ENCODE measurements at regions of chr22 and their contacts with region 1.

Region 1: DNA sequence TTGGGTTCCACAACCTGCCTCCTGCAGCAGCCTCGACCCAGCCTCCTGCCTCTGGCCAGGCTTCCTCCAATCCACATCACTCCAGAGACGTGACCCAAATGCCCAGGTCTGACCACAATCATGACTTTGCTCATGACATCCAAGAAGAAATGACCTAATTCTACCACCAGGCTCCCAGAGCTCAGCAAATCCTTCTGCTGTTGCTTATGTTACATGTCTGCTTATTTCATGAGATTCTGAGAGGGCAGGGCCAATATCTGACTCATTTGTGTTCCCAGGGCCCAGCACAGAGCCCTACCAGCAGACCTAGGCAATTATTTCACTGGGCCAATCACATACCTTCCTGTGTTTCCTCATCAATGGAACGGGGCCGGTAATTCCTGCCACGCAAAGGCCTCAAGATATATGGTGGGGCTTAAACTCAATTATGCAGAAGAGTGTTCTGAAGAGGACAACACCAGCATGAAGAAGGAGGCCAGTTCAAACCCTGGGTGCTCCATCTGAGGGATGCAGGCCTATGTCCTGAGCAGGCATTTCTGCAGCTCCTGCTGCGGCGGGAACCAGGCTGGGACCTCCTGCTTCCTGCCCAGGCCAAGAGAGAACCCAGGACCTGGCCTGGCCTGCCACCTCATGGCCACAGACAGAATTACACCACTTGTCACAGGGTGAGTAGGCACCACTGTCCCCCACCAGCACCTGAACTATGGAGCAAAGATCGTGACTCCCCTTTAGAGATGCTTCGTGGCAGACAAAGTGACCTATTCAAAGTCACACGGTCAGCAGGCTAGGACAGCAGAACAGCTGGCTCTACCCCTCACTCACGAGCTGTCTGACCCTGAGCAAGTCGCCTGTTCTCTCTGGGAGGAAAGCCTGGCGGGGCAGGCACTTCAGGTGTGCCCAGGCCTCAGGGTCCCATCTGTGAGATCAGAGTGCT is 5.9 kb downstream of the CENPM start:
- DNase-seq: peak; percentile 85
- ATAC-seq: peak; percentile 55
- H3K4me3 Mint-ChIP-seq: peak overlapping the region; percentile 92
- H3K27ac Mint-ChIP-seq: peak overlapping the region; percentile 100
- H3K4me1 Mint-ChIP-seq: peaks cover 61% of the 10 kb centered on the region
- H3K27me3 Mint-ChIP-seq: no peaks in the 10 kb centered on the region
- CTCF ChIP-seq: no peak

Region 2: DNA sequence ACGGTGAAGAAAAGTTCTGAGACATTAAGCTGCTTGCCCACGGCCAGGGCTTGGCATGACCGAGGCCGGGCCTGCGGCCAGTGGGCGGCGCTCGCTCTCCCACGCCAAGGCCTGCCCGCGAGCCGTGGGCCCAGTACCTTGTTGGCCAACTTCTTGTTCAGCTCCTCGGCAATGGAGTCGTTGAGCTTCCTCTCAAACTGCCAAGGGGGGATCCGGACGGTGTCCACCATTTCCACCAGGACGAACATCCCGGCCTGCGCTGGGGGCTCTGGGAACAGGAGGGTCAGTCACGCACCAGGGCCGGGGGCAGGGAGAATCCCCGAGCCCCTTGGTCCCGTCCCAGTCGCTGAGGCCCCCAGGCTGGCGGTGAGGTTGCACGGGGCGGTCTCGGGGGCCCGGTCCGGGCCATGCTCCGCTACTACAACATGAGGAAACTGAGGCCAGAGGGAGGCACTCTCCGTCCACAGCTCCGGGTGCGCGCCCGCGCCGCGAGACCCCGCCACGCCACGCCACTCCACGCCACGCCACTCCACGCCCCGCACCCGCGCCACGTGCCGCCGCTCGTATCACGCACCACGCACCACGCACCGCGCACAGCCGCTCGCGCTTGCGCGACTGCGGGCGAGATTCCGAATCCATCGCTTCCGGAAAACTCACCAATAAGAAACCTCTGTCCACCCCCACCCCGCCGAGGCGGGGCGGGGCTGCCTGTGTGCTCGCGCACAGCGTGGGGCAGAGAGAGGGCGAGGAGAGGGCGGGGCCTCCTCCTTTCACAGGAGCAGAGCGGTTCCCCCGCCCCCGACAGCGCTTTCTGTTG is 397.0 kb before region 1 on chr22 and contains the start of gene POLR3H:
- CTCF ChIA-PET with region 1: no interaction called
- POLR2A ChIA-PET with region 1: no interaction called
- intact Hi-C with region 1: loop called (anchors 5 kb)
- DNase-seq: peak; percentile 93
- ATAC-seq: peak; percentile 99
- H3K4me3 Mint-ChIP-seq: peak within 1 kb of the TSS; percentile 96
- H3K27ac Mint-ChIP-seq: peak within 1 kb of the TSS; percentile 86
- H3K4me1 Mint-ChIP-seq: peaks cover 43% of the 10 kb centered on the region
- H3K27me3 Mint-ChIP-seq: no peaks in the 10 kb centered on the region
- CTCF ChIP-seq: no peak
- total RNA-seq, gene POLR3H: 39.0 and 43.9 TPM in 2 replicates

Region 3: GRCh38 chr22:41697126-41697775 is 243.8 kb before region 1 on chr22:
- CTCF ChIA-PET with region 1: interaction called, 81 read pairs
- POLR2A ChIA-PET with region 1: interaction called, 34 read pairs
- intact Hi-C with region 1: no loop called
- DNase-seq: peak; percentile 91
- ATAC-seq: peak; percentile 83
- H3K4me3 Mint-ChIP-seq: peak overlapping the region; percentile 63
- H3K27ac Mint-ChIP-seq: peak overlapping the region; percentile 72
- H3K4me1 Mint-ChIP-seq: peaks cover 12% of the 10 kb centered on the region
- H3K27me3 Mint-ChIP-seq: no peaks in the 10 kb centered on the region
- CTCF ChIP-seq: peak; percentile 51

Region 4: DNA sequence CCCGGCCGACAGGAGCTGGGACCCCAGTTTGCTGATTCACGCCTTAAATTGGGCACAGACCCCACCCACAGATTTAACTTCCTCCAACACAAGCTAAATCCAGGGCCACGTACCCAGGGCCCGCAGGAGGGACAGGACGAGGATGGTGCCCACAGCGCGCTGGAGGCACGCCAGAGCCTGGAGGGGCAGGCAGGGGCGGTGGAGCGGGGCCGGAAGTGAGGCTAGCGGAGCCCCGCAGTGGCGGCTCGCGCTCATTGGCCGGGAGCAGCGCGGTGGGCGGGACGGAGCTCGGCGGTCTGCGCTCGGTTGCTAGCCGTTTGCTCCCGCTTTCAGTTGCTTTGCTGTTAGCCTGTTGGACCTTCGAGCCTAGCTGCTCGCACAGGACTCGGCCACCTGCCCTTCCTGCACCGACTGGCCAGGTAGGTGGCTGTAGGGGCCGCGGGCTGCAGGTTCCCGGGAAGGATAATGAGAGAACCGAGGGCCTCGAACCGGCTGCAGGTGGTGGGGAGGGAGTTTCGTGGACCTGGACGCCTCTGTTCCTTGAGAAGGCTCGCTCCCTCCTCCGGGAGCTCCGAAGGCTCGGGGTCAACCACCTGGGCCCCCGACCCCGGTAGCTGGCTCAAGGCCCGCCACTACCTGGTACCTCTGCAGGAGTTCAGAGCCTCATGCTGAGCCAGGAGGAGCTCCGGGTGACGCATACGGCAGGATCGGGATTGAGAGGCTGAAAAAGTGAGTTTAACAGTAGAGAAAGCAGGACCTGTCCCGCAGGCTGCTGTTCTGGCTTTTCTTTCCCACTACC is 140.6 kb before region 1 on chr22 and contains the start of gene CCDC134:
- CTCF ChIA-PET with region 1: interaction called, 3 read pairs
- POLR2A ChIA-PET with region 1: interaction called, 25 read pairs
- intact Hi-C with region 1: no loop called
- DNase-seq: peak; percentile 88
- ATAC-seq: peak; percentile 98
- H3K4me3 Mint-ChIP-seq: peak within 1 kb of the TSS; percentile 98
- H3K27ac Mint-ChIP-seq: peak within 1 kb of the TSS; percentile 97
- H3K4me1 Mint-ChIP-seq: peaks cover 34% of the 10 kb centered on the region
- H3K27me3 Mint-ChIP-seq: no peaks in the 10 kb centered on the region
- CTCF ChIP-seq: no peak
- total RNA-seq, gene CCDC134: 9.2 and 13.2 TPM in 2 replicates

Region 5: DNA sequence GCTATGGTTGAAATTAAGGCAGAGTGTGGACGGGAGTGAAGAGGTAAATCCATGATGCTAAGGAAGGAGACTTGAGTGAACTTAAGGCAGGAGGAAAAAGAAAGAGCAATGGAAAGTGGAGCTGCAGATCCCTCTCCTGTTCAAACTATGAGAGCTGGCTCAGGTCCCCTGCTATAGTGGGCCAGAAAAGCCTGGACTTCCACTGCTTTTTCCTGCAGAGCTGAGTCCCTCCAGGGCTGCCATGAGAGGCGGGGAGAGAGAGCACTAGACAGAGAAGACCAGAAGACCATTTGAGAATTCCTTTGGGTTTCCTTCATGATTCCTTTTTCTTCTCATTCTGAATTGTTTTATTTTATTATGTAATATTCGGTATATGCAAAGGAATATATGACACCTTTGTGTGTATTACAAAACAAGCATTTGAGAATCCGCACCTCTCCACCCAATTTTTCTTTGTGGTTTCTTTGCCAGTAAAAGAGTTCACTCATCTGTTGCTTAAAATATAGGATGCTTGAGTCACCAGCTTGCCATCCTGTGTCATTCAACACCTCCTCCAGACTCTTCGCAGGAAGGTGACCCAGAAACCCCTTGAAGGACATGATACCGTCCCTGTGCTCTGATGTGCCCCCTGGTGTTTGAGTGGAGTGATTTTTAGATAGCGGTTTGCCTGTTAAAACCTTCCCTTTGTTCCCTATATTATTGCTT is 83.8 kb before region 1 on chr22:
- CTCF ChIA-PET with region 1: interaction called, 27 read pairs
- POLR2A ChIA-PET with region 1: interaction called, 74 read pairs
- intact Hi-C with region 1: loop called (anchors 1 kb)
- DNase-seq: no peak
- ATAC-seq: peak; percentile 18
- H3K4me3 Mint-ChIP-seq: peak overlapping the region; percentile 45
- H3K27ac Mint-ChIP-seq: peak overlapping the region; percentile 77
- H3K4me1 Mint-ChIP-seq: peaks cover 72% of the 10 kb centered on the region
- H3K27me3 Mint-ChIP-seq: no peaks in the 10 kb centered on the region
- CTCF ChIP-seq: no peak

Region 6: GRCh38 chr22:41919357-41920224 is 21.5 kb before region 1 on chr22:
- CTCF ChIA-PET with region 1: interaction called, 258 read pairs
- POLR2A ChIA-PET with region 1: interaction called, 1,414 read pairs
- intact Hi-C with region 1: loop called (anchors 1 kb)
- DNase-seq: peak; percentile 82
- ATAC-seq: peak; percentile 53
- H3K4me3 Mint-ChIP-seq: peak overlapping the region; percentile 82
- H3K27ac Mint-ChIP-seq: peak overlapping the region; percentile 94
- H3K4me1 Mint-ChIP-seq: peaks cover 88% of the 10 kb centered on the region
- H3K27me3 Mint-ChIP-seq: no peaks in the 10 kb centered on the region
- CTCF ChIP-seq: no peak

Region 7: DNA sequence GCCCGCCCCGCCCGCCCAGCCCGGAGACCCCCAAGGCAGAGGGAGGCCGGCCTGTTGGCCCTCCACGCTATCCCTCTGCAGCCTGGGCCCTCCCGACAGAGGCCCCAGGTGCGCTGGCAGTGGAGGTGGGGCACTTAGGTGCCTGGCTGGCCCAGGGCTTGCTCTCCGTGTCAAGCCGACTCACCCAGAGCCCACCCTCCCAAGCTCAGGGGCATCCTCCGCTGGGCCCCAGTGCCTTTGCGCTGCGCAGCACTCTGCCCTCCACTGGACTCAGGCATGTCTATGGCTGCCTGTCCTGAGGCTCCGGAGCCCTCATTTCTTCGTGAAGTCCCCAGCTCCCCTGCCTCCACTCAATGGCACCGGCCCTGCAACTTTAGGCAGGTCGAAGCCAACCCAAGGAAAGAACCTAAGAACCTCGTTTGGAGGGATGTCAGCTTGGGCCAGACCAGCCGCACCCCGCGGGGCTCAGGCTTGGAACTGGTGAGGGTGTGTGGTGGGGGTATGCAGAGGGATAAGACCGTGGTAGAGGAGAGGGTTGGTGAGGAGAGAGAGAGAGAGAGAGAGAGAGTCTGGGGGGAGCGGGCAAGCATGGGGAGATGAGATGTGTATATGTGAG is 16.9 kb after region 1 on chr22:
- CTCF ChIA-PET with region 1: interaction called, 5 read pairs
- POLR2A ChIA-PET with region 1: interaction called, 4 read pairs
- intact Hi-C with region 1: loop called (anchors 2 kb)
- DNase-seq: no peak
- ATAC-seq: no peak
- H3K4me3 Mint-ChIP-seq: no peak overlapping the region
- H3K27ac Mint-ChIP-seq: no peak overlapping the region
- H3K4me1 Mint-ChIP-seq: peaks cover 15% of the 10 kb centered on the region
- H3K27me3 Mint-ChIP-seq: no peaks in the 10 kb centered on the region
- CTCF ChIP-seq: peak; percentile 12

Region 8: DNA sequence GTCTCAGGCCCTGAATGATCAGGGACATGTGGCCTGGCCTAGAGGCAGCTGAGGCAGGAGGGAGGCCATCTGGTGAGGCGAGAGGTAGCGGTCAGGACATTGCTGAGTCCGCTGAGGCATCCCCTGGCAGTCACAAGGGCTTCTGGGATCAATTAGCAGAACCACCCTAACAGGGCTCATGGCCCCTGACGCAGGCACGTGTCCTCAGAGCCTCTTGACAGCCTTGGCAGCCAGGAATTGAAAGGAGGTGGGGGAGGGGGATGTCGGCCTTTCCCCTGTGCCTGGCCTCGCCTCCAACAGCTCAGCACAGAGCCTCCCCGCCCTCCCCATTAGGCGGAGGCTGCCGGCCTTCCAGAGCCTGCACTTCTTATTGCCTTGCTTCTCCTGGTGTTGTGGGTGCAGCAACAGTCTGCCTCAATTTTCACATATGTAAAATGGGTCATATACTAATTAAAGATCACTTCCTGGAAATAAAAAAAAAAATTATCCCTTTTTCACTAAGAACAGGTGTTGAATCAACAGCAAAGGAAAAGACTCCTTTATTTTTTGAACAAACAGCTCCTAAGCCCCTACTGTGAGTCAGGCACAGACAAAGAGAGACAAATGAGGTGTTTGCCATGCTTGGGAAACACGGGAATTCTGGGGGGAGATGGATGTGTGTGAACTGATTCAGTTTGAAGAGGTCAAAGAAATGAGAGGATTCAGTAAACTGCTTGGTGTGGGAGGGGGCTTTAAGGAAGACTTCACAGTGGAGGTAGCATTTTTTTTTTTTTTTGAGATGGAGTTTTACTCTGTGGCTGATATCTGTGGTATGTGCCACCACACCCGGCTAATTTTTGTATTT is 435.8 kb after region 1 on chr22:
- CTCF ChIA-PET with region 1: no interaction called
- POLR2A ChIA-PET with region 1: no interaction called
- intact Hi-C with region 1: no loop called
- DNase-seq: no peak
- ATAC-seq: no peak
- H3K4me3 Mint-ChIP-seq: no peak overlapping the region
- H3K27ac Mint-ChIP-seq: no peak overlapping the region
- H3K4me1 Mint-ChIP-seq: peaks cover 3% of the 10 kb centered on the region
- H3K27me3 Mint-ChIP-seq: peaks cover 22% of the 10 kb centered on the region
- CTCF ChIP-seq: no peak

Measured in activated B cell treated with CpG ODN at 0.5 μM for 24 hours (primary cell).